ENCODE measurements at regions of chr2 and their contacts with region 1.

Region 1: GRCh38 chr2:158006961-158007719 is 94.5 kb upstream of the UPP2 start:
- DNase-seq: no peak
- ATAC-seq: no peak
- H3K4me3 ChIP-seq: no peak overlapping the region
- H3K27ac ChIP-seq: no peak overlapping the region
- H3K4me1 ChIP-seq: peaks cover 0 to 8% (median 5%) of the 10 kb centered on the region in 12 donors
- H3K27me3 ChIP-seq: no peaks in the 10 kb centered on the region
- CTCF ChIP-seq: no peak
- POLR2A ChIP-seq: no peak

Region 2: GRCh38 chr2:157302492-157303099 is 704.5 kb before region 1 on chr2:
- intact Hi-C with region 1: loop called in 7 of 10 experiments (anchors 1 to 10 kb)
- DNase-seq: no peak
- ATAC-seq: peak; percentile 50 to 74 (median 65)
- H3K4me3 ChIP-seq: no peak overlapping the region
- H3K27ac ChIP-seq: no peak overlapping the region
- H3K4me1 ChIP-seq: no peaks in the 10 kb centered on the region
- H3K27me3 ChIP-seq: peaks cover 0 to 11% (median 0%) of the 10 kb centered on the region in 9 donors
- CTCF ChIP-seq: peak; percentile 65 to 82 (median 76)
- POLR2A ChIP-seq: no peak

Region 3: GRCh38 chr2:157492189-157492773 is 514.9 kb before region 1 on chr2:
- intact Hi-C with region 1: loop called in 9 of 10 experiments (anchors 2 to 5 kb)
- DNase-seq: peak; percentile 52 to 70 (median 64)
- ATAC-seq: peak in 3 of 4 donors; percentile 75 to 88 (median 85)
- H3K4me3 ChIP-seq: no peak overlapping the region
- H3K27ac ChIP-seq: no peak overlapping the region
- H3K4me1 ChIP-seq: no peaks in the 10 kb centered on the region
- H3K27me3 ChIP-seq: no peaks in the 10 kb centered on the region
- CTCF ChIP-seq: peak; percentile 53 to 80 (median 70)
- POLR2A ChIP-seq: no peak

Region 4: DNA sequence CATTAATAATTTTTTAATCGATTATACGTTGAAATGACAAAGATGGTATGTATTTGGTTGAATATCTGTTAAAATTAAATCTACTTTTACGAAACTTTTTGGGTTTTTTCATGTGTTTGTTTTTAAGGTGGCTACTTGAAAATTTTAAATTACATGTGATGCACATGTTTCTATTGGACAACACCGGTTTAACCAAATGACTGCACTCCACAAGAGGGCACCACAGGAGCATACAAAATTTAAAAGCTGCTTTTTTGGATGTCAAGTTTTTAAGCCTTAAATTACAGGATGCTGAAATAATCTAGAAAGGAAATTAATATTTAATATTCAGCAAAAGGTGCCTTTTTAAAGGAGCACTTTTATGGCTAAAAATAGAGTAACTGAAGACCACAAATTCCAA is 229.7 kb before region 1 on chr2:
- intact Hi-C with region 1: loop called (anchors 1 to 5 kb)
- DNase-seq: peak in 1 of 5 donors; percentile 32
- ATAC-seq: no peak
- H3K4me3 ChIP-seq: no peak overlapping the region
- H3K27ac ChIP-seq: no peak overlapping the region
- H3K4me1 ChIP-seq: peaks cover 0 to 13% (median 9%) of the 10 kb centered on the region in 12 donors
- H3K27me3 ChIP-seq: no peaks in the 10 kb centered on the region
- CTCF ChIP-seq: peak; percentile 52 to 83 (median 73)
- POLR2A ChIP-seq: no peak

Region 5: DNA sequence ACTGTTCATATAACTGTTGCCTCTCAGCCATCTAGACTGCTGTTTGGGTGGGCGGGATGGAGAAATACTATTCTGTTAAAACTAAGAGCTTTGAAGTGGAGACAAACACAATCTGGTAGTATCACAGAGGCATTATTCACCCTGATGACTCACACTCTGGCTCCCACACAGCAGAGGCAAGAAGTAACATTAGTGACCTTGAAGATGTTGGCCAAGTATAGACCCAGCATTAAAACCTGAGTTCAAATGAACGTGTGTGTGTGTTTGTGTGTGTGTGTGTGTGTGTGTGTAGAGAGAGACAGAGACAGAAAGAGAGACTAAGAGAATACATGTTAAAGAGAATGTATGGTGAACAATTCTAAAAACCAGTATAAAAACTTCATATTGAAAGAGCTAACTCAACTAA is 108.5 kb before region 1 on chr2:
- intact Hi-C with region 1: loop called in 3 of 10 experiments (anchors 5 to 10 kb)
- DNase-seq: peak in 1 of 5 donors; percentile 55
- ATAC-seq: peak; percentile 50 to 92 (median 82)
- H3K4me3 ChIP-seq: no peak overlapping the region
- H3K27ac ChIP-seq: peak overlapping the region in 1 of 12 donors; percentile 76
- H3K4me1 ChIP-seq: peaks cover 0 to 26% (median 5%) of the 10 kb centered on the region in 12 donors
- H3K27me3 ChIP-seq: no peaks in the 10 kb centered on the region
- CTCF ChIP-seq: no peak
- POLR2A ChIP-seq: no peak